ENCODE measurements at regions of chr16 and their contacts with region 1.

Region 1: GRCh38 chr16:1929578-1930337 is 11.5 kb upstream of the HS3ST6 start:
- DNase-seq: peak; percentile 83 to 92 (median 91)
- H3K4me3 ChIP-seq: peak overlapping the region in 2 of 4 donors; percentile 46 to 59
- H3K27ac ChIP-seq: peak overlapping the region in 2 of 5 donors; percentile 45 to 55
- H3K4me1 ChIP-seq: peaks cover 6 to 8% of the 10 kb centered on the region in 2 donors
- H3K27me3 ChIP-seq: no peaks in the 10 kb centered on the region
- CTCF ChIP-seq: peak; percentile 53 to 100 (median 84)
- POLR2A ChIP-seq: no peak

Region 2: GRCh38 chr16:1863681-1864460 is 65.9 kb before region 1 on chr16:
- intact Hi-C with region 1: loop called in 1 of 2 experiments (anchors 5 kb)
- DNase-seq: no peak
- H3K4me3 ChIP-seq: no peak overlapping the region
- H3K27ac ChIP-seq: no peak overlapping the region
- H3K4me1 ChIP-seq: no peaks in the 10 kb centered on the region
- H3K27me3 ChIP-seq: peaks cover 27% of the 10 kb centered on the region
- CTCF ChIP-seq: peak; percentile 44 to 72 (median 55)
- POLR2A ChIP-seq: no peak

Region 3: GRCh38 chr16:2071454-2072202 is 141.9 kb after region 1 on chr16:
- intact Hi-C with region 1: no loop called
- DNase-seq: no peak
- H3K4me3 ChIP-seq: no peak overlapping the region
- H3K27ac ChIP-seq: no peak overlapping the region
- H3K4me1 ChIP-seq: no peaks in the 10 kb centered on the region
- H3K27me3 ChIP-seq: no peaks in the 10 kb centered on the region
- CTCF ChIP-seq: no peak
- POLR2A ChIP-seq: no peak

Measured in adrenal gland (tissue), 19 donors.